ENCODE measurements at regions of chr19 and their contacts with region 1.

Region 1: DNA sequence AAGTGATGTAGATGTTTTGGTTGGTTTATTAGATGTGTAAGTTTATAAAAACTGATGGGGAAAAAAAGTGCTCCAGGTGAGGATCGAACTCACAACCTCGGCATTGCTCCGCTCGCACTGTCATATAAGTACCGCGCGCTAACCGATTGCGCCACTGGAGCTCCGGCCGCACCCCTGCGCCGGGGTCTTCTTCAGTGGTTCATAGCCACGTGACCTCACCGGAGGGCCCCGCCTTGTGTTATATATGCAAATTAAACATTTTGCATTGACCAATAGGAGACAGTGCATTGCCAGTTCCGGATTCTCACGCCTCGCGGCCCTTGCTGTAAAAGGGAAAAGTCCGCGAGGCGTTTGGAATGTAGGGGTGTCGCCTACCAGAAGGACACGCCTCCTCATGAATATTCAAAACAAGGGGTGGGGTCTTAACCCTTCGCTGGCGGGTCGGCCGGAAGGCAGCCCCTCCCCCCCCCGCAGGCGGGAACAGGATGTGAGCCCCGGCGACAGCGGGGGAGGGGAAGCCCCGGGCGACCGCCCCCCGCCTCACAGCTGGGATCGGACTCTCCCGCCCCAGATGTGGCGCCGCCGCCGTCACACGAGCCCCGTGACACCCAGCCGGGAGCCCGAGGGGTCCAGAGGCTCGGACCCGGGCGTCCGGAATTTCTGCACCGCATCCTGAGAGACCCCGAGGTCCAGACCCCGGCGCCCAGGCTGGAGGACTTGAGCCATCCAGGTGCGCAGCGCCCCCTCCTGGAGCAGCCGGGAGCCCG is at the start of gene PLEKHG2:
- DNase-seq: peak; percentile 99
- ATAC-seq: peak; percentile 59
- H3K4me3 ChIP-seq: peak within 1 kb of the TSS; percentile 98
- H3K27ac ChIP-seq: peak within 1 kb of the TSS; percentile 100
- H3K4me1 ChIP-seq: peaks cover 15% of the 10 kb centered on the region
- H3K27me3 ChIP-seq: no peaks in the 10 kb centered on the region
- CTCF ChIP-seq: peak in 2 of 3 experiments; percentile 79 to 90
- EP300 ChIP-seq: peak; percentile 26 to 31; a peak in 2 of 4 replicates
- POLR2A ChIP-seq: peak; percentile 87
- RAD21 ChIP-seq: peak; percentile 44
- polyA plus RNA-seq, gene PLEKHG2: 3.0 to 7.2 TPM

Region 2: DNA sequence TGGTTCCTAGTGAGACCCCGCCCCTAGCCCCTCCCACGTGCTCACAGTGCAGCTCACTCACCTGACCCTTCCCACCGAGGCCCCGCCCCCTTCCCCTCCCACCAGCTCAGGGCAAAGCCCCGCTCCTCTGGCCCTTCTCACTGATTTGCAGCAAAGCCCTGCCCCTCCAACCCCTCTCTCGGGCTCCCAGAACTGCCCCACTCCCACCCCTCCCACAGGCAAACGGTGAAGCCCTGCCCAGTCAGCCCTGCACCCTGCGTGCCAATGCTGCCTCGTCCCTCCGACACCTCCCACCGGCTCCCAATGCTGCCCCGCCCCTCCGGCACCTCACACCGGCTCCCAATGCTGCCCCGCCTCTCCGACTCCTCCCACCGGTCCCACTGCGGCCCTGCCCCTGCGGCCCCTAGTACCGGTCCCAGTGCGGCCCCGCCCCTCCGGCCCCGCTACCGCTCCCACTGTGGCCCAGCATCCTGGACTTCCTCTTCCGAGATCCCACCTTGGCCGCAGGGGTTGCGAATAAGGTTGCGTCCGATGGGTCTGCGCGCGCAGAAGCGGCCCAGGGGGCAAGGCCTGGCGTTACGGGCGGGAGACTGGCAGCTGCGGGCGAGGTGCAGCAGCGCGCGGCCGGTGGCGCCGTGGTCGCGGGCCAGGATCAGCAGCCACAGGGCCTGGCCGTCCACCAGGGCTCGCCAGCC is 380.8 kb before region 1 on chr19:
- CTCF ChIA-PET with region 1: no interaction called
- POLR2A ChIA-PET with region 1: no interaction called
- RAD21 ChIA-PET with region 1: no interaction called
- SMC1A ChIA-PET with region 1: no interaction called
- in situ Hi-C with region 1: no loop called
- intact Hi-C with region 1: loop called (anchors 5 kb)
- DNase-seq: peak; percentile 60
- ATAC-seq: peak; percentile 94
- H3K4me3 ChIP-seq: peak overlapping the region; percentile 72
- H3K27ac ChIP-seq: no peak overlapping the region
- H3K4me1 ChIP-seq: peaks cover 6% of the 10 kb centered on the region; the same call in 1 of the 2 replicates
- H3K27me3 ChIP-seq: no peaks in the 10 kb centered on the region
- CTCF ChIP-seq: no peak
- EP300 ChIP-seq: no peak
- POLR2A ChIP-seq: no peak; the same call in 1 of the 2 replicates
- RAD21 ChIP-seq: no peak

Region 3: DNA sequence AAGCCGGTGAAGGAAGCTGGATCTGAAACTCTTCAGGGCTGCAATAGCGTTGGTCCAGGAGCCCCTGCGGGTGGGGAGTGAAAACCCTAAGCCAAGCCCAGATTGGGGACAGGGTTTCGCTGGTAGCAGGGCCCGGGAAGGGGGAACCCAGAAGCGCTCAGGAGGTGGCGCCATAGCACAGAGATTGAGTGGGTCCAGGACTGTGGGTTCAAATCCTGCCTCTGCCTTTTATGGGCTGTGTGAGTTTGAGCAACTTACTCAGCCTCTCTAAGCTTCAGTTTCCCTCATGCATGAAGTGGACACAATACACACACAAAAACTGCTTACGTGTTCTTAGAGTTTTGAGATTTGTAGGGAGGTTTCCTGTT is 199.9 kb before region 1 on chr19:
- CTCF ChIA-PET with region 1: no interaction called
- POLR2A ChIA-PET with region 1: no interaction called
- RAD21 ChIA-PET with region 1: no interaction called
- SMC1A ChIA-PET with region 1: no interaction called
- in situ Hi-C with region 1: no loop called
- intact Hi-C with region 1: loop called (anchors 5 kb)
- DNase-seq: peak; percentile 2
- ATAC-seq: peak; percentile 83
- H3K4me3 ChIP-seq: no peak overlapping the region
- H3K27ac ChIP-seq: no peak overlapping the region
- H3K4me1 ChIP-seq: no peaks in the 10 kb centered on the region
- H3K27me3 ChIP-seq: peaks cover 0 to 3% of the 10 kb centered on the region in 2 experiments; a peak in 1 of 4 replicates
- CTCF ChIP-seq: peak; percentile 49 to 56 (median 55); a peak in 5 of 6 replicates
- EP300 ChIP-seq: no peak
- POLR2A ChIP-seq: no peak
- RAD21 ChIP-seq: peak; percentile 53

Region 4: DNA sequence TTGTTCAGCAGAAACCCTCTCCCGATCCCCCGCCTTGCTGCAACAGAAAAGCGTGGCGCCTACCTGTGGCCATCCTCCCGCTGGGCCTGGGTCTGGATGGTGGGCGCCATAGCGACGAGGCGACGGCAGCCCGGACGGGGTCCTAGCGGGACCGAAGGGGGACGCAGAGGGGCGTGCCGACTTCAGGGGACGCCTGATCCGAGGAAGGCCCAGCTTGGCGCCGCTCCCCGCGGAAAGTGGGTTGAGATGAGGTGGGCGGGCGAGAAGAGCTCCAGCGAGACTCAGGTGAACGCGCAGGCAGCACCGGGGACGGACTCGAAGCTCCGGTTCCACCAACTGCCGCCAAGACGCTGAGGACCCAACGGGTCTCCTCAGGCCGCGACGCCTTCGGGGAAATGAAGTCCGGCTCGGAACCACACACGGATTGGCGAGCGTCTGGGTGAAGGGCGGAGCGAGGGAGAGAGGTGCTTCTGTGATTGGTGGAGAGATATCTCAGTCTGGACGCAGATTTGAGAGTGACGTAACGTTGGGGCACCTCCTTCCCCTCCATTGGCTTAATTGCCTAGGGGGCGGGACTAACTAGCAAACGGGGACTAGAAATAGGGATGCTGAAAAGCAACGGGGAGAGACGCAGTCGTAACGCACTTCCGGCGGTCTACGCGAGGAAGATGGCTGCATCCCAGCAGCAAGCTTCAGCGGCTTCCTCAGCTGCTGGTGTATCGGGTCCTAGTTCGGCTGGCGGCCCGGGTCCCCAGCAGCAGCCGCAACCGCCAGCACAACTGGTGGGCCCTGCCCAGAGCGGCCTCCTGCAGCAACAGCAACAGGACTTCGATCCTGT is 21.3 kb before region 1 on chr19 and contains the starts of genes MED29 and PAF1:
- CTCF ChIA-PET with region 1: interaction called, 218 read pairs
- POLR2A ChIA-PET with region 1: interaction called, 39 read pairs
- RAD21 ChIA-PET with region 1: interaction called, 18 read pairs
- SMC1A ChIA-PET with region 1: interaction called, 146 read pairs
- in situ Hi-C with region 1: no loop called
- intact Hi-C with region 1: no loop called
- DNase-seq: peak; percentile 100
- ATAC-seq: peak; percentile 99
- H3K4me3 ChIP-seq: peak within 1 kb of the TSS; percentile 99
- H3K27ac ChIP-seq: peak within 1 kb of the TSS; percentile 96
- H3K4me1 ChIP-seq: peaks cover 10% of the 10 kb centered on the region
- H3K27me3 ChIP-seq: no peaks in the 10 kb centered on the region
- CTCF ChIP-seq: 0 out of 6 replicates have a peak, but pooled peaks of 1 of the 3 experiments have one; percentile 10
- EP300 ChIP-seq: no peak
- POLR2A ChIP-seq: peak; percentile 94
- RAD21 ChIP-seq: no peak
- polyA plus RNA-seq, gene MED29: 3.2 to 5.1 TPM
- polyA plus RNA-seq, gene PAF1: 1.7 to 3.7 TPM

Region 5: GRCh38 chr19:39435499-39436349 is 23.4 kb after region 1 on chr19 and contains the start of gene RPS16:
- CTCF ChIA-PET with region 1: interaction called, 8 read pairs
- POLR2A ChIA-PET with region 1: interaction called, 8 read pairs
- RAD21 ChIA-PET with region 1: interaction called, 12 read pairs
- SMC1A ChIA-PET with region 1: interaction called, 9 read pairs
- in situ Hi-C with region 1: no loop called
- intact Hi-C with region 1: loop called (anchors 1 kb)
- DNase-seq: peak; percentile 88
- ATAC-seq: peak; percentile 88
- H3K4me3 ChIP-seq: peak within 1 kb of the TSS; percentile 97
- H3K27ac ChIP-seq: peak within 1 kb of the TSS; percentile 91
- H3K4me1 ChIP-seq: peaks cover 37% of the 10 kb centered on the region
- H3K27me3 ChIP-seq: no peaks in the 10 kb centered on the region
- CTCF ChIP-seq: no peak
- EP300 ChIP-seq: no peak
- POLR2A ChIP-seq: peak; percentile 100
- RAD21 ChIP-seq: no peak
- polyA plus RNA-seq, gene RPS16: 3,810 to 4,177 TPM

Measured in GM12878 (cell line).